Psoas muscle (tissue), 8 donors: ENCODE measurements at regions of chr13 and their contacts with region 1.

Region 1: DNA sequence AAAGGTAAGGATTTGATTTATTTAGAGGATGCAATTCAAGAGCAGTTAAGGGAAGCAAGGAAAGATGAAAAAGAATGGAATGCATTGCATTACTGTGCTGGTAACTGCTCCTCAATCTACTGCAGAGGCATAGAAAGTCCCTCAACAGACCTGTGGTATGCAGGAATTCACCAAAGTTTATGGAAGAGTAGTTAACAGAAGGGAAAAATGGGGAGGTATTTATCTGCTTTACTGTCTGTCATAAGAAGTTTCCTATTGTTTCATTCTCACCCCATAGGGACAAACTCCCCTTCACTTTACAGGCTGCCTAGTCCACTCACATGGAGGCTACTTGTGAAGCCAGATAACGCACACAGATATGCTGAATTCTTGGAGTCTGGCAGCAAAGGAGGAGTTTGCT is 354.9 kb upstream of the SPRY2 start:
- DNase-seq: no peak
- ATAC-seq: no peak
- H3K4me3 ChIP-seq: no peak overlapping the region
- H3K27ac ChIP-seq: no peak overlapping the region
- H3K4me1 ChIP-seq: no peaks in the 10 kb centered on the region
- H3K27me3 ChIP-seq: no peaks in the 10 kb centered on the region
- CTCF ChIP-seq: no peak

Region 2: GRCh38 chr13:80654638-80655249 is 41.1 kb before region 1 on chr13:
- intact Hi-C with region 1: no loop called
- DNase-seq: no peak
- ATAC-seq: no peak
- H3K4me3 ChIP-seq: no peak overlapping the region
- H3K27ac ChIP-seq: no peak overlapping the region
- H3K4me1 ChIP-seq: no peaks in the 10 kb centered on the region
- H3K27me3 ChIP-seq: no peaks in the 10 kb centered on the region
- CTCF ChIP-seq: no peak

Region 3: DNA sequence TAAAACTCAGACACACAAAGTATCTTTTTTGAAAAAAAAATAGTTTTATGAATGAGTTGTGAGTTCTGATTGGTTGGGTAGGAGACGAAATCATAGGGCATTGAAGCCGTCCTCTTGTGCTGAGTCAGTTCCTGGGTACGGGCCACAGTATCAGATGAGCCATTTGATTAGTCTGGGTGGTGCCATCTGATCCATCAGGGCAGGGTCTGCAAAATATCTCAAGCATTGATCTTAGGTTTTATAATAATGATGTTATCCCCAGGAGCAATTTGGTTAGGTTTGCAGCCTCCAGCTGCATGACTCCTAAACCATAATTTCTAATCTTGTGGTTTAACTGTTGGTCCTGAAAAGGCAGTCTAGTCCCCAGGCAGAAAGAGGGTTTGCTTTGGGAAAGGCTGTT is 1875.8 kb after region 1 on chr13:
- intact Hi-C with region 1: loop called in 1 of 2 experiments (anchors 5 kb)
- DNase-seq: no peak
- ATAC-seq: no peak
- H3K4me3 ChIP-seq: no peak overlapping the region
- H3K27ac ChIP-seq: no peak overlapping the region
- H3K4me1 ChIP-seq: no peaks in the 10 kb centered on the region
- H3K27me3 ChIP-seq: no peaks in the 10 kb centered on the region
- CTCF ChIP-seq: no peak